GM10248 (cell line): ENCODE measurements at regions of chr1 and their contacts with region 1.

Region 1: GRCh38 chr1:114685851-114686534 is 9.4 kb downstream of the AMPD1 start:
- DNase-seq: no peak
- CTCF ChIP-seq: no peak

Region 2: GRCh38 chr1:114670083-114671010 is 15.6 kb before region 1 on chr1:
- CTCF ChIA-PET with region 1: interaction called, 11 read pairs
- POLR2A ChIA-PET with region 1: no interaction called
- DNase-seq: peak; percentile 96
- CTCF ChIP-seq: peak; percentile 6